K562 (cell line): ENCODE measurements at regions of chr1 and their contacts with region 1.

Region 1: GRCh38 chr1:37458528-37458927 is 15.9 kb upstream of the ZC3H12A start:
- DNase-seq: peak in 1 of 4 experiments; percentile 34
- ATAC-seq: peak; percentile 42
- H3K4me3 ChIP-seq: no peak overlapping the region
- H3K27ac ChIP-seq: no peak overlapping the region
- H3K4me1 ChIP-seq: peaks cover 5 to 7% of the 10 kb centered on the region in 2 experiments; a peak in 4 of 5 replicates
- H3K27me3 ChIP-seq: peaks cover 5 to 16% of the 10 kb centered on the region in 2 experiments; a peak in 4 of 5 replicates
- CTCF ChIP-seq: peak; percentile 23 to 51 (median 43); a peak in 5 of 6 replicates
- EP300 ChIP-seq: no peak
- POLR2A ChIP-seq: no peak
- RAD21 ChIP-seq: peak in 1 of 2 experiments; percentile 47; a peak in 2 of 4 replicates

Region 2: GRCh38 chr1:37410815-37411214 is 47.7 kb before region 1 on chr1:
- CTCF ChIA-PET with region 1: no interaction called
- POLR2A ChIA-PET with region 1: no interaction called
- in situ Hi-C with region 1: no loop called
- intact Hi-C with region 1: no loop called
- DNase-seq: peak; percentile 62 to 69 (median 65)
- ATAC-seq: peak; percentile 94
- H3K4me3 ChIP-seq: no peak overlapping the region
- H3K27ac ChIP-seq: no peak overlapping the region
- H3K4me1 ChIP-seq: peaks cover 5 to 12% of the 10 kb centered on the region in 2 experiments; a peak in 3 of 5 replicates
- H3K27me3 ChIP-seq: peaks cover 5 to 16% of the 10 kb centered on the region in 2 experiments; a peak in 4 of 5 replicates
- CTCF ChIP-seq: no peak
- EP300 ChIP-seq: no peak
- POLR2A ChIP-seq: no peak
- RAD21 ChIP-seq: no peak

Region 3: GRCh38 chr1:37676281-37677243 is 218.0 kb after region 1 on chr1:
- CTCF ChIA-PET with region 1: interaction called, 53 read pairs
- POLR2A ChIA-PET with region 1: no interaction called
- in situ Hi-C with region 1: loop called (anchors 5 kb)
- intact Hi-C with region 1: loop called (anchors 1 kb)
- DNase-seq: no peak
- ATAC-seq: no peak
- H3K4me3 ChIP-seq: no peak overlapping the region
- H3K27ac ChIP-seq: no peak overlapping the region
- H3K4me1 ChIP-seq: no peaks in the 10 kb centered on the region; a peak in 1 of 5 replicates
- H3K27me3 ChIP-seq: peaks cover 36 to 50% of the 10 kb centered on the region in 2 experiments
- CTCF ChIP-seq: no peak
- EP300 ChIP-seq: no peak
- POLR2A ChIP-seq: no peak
- RAD21 ChIP-seq: no peak